Ascending aorta (tissue), 2 donors: ENCODE measurements at regions of chr4 and their contacts with region 1.

Region 1: GRCh38 chr4:122854447-122855352 is 28.1 kb downstream of the FGF2 start:
- DNase-seq: peak in 1 of 2 donors; percentile 76
- H3K4me3 ChIP-seq: peak overlapping the region; percentile 14 to 59
- H3K27ac ChIP-seq: peak overlapping the region; percentile 85 to 89
- H3K4me1 ChIP-seq: peaks cover 14 to 45% of the 10 kb centered on the region in 2 donors
- H3K27me3 ChIP-seq: no peaks in the 10 kb centered on the region
- CTCF ChIP-seq: no peak

Region 2: GRCh38 chr4:122814426-122814825 is 40.3 kb before region 1 on chr4:
- intact Hi-C with region 1: no loop called
- DNase-seq: no peak
- H3K4me3 ChIP-seq: no peak overlapping the region
- H3K27ac ChIP-seq: no peak overlapping the region
- H3K4me1 ChIP-seq: no peaks in the 10 kb centered on the region
- H3K27me3 ChIP-seq: no peaks in the 10 kb centered on the region
- CTCF ChIP-seq: no peak

Region 3: GRCh38 chr4:122898370-122899150 is 43.9 kb after region 1 on chr4:
- intact Hi-C with region 1: loop called (anchors 5 kb)
- DNase-seq: peak in 1 of 2 donors; percentile 85
- H3K4me3 ChIP-seq: no peak overlapping the region
- H3K27ac ChIP-seq: peak overlapping the region; percentile 60 to 78
- H3K4me1 ChIP-seq: peaks cover 0 to 46% of the 10 kb centered on the region in 2 donors
- H3K27me3 ChIP-seq: no peaks in the 10 kb centered on the region
- CTCF ChIP-seq: no peak